Ascending aorta (tissue), 2 donors: ENCODE measurements at regions of chr7 and their contacts with region 1.

Region 1: GRCh38 chr7:43869006-43869866 is at the start of gene MRPS24:
- DNase-seq: peak; percentile 73 to 97
- H3K4me3 ChIP-seq: peak within 1 kb of the TSS; percentile 78 to 99
- H3K27ac ChIP-seq: peak within 1 kb of the TSS; percentile 93 to 95
- H3K4me1 ChIP-seq: peaks cover 12 to 17% of the 10 kb centered on the region in 2 donors
- H3K27me3 ChIP-seq: no peaks in the 10 kb centered on the region
- CTCF ChIP-seq: no peak
- total RNA-seq, gene MRPS24: 145 TPM

Region 2: GRCh38 chr7:43906331-43907010 is 37.2 kb after region 1 on chr7 and contains the start of gene URGCP:
- intact Hi-C with region 1: loop called (anchors 2 kb)
- DNase-seq: peak in 1 of 2 donors; percentile 67
- H3K4me3 ChIP-seq: peak within 1 kb of the TSS; percentile 74 to 81
- H3K27ac ChIP-seq: peak within 1 kb of the TSS; percentile 90 to 96
- H3K4me1 ChIP-seq: peaks cover 0 to 20% of the 10 kb centered on the region in 2 donors
- H3K27me3 ChIP-seq: no peaks in the 10 kb centered on the region
- CTCF ChIP-seq: no peak
- total RNA-seq, gene URGCP: 29.2 TPM

Region 3: GRCh38 chr7:43925984-43926797 is 57.0 kb after region 1 on chr7 and contains the start of gene UBE2D4:
- intact Hi-C with region 1: loop called (anchors 1 kb)
- DNase-seq: peak; percentile 56 to 92
- H3K4me3 ChIP-seq: peak within 1 kb of the TSS; percentile 82 to 86
- H3K27ac ChIP-seq: peak within 1 kb of the TSS; percentile 96
- H3K4me1 ChIP-seq: peaks cover 0 to 7% of the 10 kb centered on the region in 2 donors
- H3K27me3 ChIP-seq: no peaks in the 10 kb centered on the region
- CTCF ChIP-seq: no peak
- total RNA-seq, gene UBE2D4: 13.1 TPM

Region 4: DNA sequence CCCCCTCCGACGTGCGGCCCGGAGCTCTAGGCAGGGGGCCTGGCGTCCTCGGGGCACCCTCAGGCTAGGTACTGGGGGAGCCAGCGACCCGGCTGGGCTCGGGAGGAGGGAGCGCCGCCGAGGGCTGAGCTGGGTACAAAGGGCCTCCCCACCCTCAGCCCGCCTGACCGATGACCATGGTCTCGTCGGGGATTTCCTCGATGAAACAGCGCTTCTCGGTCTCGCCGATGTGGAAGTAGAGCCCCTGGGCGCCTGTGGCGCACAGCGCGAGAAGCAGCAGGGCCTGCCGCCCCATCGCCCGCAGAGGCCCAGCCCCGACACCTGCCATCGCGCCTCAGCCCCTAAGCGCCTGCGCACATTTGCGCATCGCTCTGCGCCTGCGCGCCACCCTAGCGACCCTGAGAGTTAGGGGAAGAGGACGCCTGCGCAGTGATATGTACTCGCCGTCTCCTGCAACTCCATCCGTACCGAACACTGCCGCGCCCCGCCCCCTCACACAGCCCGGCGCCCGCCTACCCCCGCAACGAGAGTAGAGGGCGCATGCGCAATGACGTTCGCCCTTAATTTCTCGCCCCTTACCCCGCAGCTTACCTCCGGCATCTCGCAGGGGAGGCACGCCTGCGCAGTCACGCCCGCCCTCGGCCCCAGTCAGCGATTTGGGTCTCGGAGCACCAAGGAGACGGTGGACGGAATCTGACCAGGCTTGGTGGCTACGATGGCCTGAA is 712.8 kb after region 1 on chr7 and contains the start of gene TMED4:
- intact Hi-C with region 1: loop called (anchors 10 kb)
- DNase-seq: peak; percentile 98 to 100
- H3K4me3 ChIP-seq: peak within 1 kb of the TSS; percentile 92 to 96
- H3K27ac ChIP-seq: peak within 1 kb of the TSS; percentile 88 to 97
- H3K4me1 ChIP-seq: peaks cover 6 to 17% of the 10 kb centered on the region in 2 donors
- H3K27me3 ChIP-seq: no peaks in the 10 kb centered on the region
- CTCF ChIP-seq: no peak
- total RNA-seq, gene TMED4: 69.1 TPM

Region 5: DNA sequence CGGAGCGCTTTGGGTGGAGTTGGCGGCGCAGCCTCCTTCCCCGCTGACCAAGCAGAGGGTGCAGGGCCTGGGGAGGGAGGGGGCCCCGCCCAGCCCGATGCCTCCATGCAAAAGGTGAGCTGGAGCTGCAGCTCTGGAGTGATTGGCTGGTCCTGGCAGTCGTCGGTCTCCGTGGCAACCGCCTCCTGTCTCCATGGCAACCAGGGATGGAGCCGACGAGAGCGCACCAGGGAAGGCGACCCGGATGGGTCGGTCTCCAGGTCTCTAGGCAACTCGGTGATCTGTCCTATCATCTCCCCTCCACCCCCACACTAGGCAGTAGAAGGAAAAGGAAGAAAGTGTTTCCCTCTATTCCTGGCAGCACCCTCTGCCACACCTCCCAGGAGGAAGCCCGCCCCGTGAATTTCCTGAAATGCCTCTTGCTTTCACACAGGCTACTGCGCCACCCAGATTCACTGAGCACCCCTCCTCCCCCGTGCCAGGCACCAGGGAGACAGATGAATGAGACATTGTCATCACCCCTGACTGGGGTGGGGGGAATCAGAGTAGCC is 1220.2 kb after region 1 on chr7:
- intact Hi-C with region 1: loop called (anchors 10 kb)
- DNase-seq: peak in 1 of 2 donors; percentile 83
- H3K4me3 ChIP-seq: peak overlapping the region; percentile 80 to 91
- H3K27ac ChIP-seq: peak overlapping the region; percentile 89 to 92
- H3K4me1 ChIP-seq: peaks cover 3 to 11% of the 10 kb centered on the region in 2 donors
- H3K27me3 ChIP-seq: no peaks in the 10 kb centered on the region
- CTCF ChIP-seq: no peak